CD4-positive, alpha-beta T cell (primary cell): ENCODE measurements at regions of chr6 and their contacts with region 1.

Region 1: DNA sequence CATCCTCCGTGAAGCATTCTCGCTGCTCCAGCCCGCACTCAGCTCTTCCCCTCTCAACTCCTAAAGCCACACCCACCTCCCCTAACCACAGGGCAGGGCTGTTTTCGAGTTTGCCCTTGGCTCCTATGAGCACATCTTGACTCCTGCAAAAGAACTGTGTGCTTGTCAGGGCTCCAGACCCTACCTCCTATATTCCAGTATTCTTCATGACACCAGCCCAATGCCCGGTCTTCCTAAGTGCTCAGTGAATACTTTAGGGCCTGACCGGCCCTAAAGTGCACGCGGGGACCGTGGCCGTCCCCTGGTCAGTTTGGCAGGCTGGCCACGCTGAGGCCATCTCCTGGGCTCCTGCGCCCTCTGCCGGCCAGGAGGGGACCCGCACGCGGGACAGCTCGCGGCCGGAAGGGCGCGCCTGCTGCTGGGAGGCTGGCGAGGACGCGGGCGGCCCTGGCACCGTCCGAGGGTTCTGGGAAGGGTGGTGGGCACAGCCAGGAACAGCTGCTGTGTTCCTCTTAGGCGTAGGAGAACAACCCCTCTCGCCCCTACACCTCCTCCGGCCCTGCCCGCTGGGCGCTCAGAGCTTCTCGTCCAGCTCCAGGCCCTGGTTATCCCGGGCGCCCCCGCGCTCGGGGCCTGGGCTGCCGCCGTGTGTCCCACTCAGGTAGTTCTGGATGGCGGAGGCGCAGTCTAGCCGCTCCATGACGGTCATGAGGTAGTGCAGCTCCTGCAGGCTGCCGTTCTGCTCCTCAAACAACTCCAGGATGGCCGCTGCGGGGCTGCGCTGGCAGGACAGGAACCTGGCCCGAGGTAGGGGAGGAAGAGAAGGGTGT is 11.0 kb downstream of the UNC5CL start:
- DNase-seq: peak; percentile 49 to 85 (median 66)
- ATAC-seq: peak; percentile 86
- H3K4me3 ChIP-seq: peak overlapping the region; percentile 78
- H3K4me3 Mint-ChIP-seq: peak overlapping the region; percentile 88
- H3K27ac ChIP-seq: peak overlapping the region in 1 of 2 donors; percentile 59
- H3K27ac Mint-ChIP-seq: peak overlapping the region; percentile 75
- H3K4me1 ChIP-seq: peaks cover 23% of the 10 kb centered on the region
- H3K4me1 Mint-ChIP-seq: peaks cover 33% of the 10 kb centered on the region
- H3K27me3 ChIP-seq: no peaks in the 10 kb centered on the region
- H3K27me3 Mint-ChIP-seq: no peaks in the 10 kb centered on the region
- CTCF ChIP-seq: peak; percentile 100

Region 2: GRCh38 chr6:39347906-39348585 is 1680.0 kb before region 1 on chr6:
- CTCF ChIA-PET with region 1: no interaction called
- POLR2A ChIA-PET with region 1: no interaction called
- intact Hi-C with region 1: loop called in 1 of 2 experiments (anchors 5 kb)
- DNase-seq: peak; percentile 20 to 64 (median 37)
- ATAC-seq: peak; percentile 37
- H3K4me3 ChIP-seq: no peak overlapping the region
- H3K4me3 Mint-ChIP-seq: no peak overlapping the region
- H3K27ac ChIP-seq: no peak overlapping the region
- H3K27ac Mint-ChIP-seq: no peak overlapping the region
- H3K4me1 ChIP-seq: no peaks in the 10 kb centered on the region
- H3K4me1 Mint-ChIP-seq: no peaks in the 10 kb centered on the region
- H3K27me3 ChIP-seq: no peaks in the 10 kb centered on the region
- H3K27me3 Mint-ChIP-seq: peaks cover 5% of the 10 kb centered on the region
- CTCF ChIP-seq: peak; percentile 84

Region 3: DNA sequence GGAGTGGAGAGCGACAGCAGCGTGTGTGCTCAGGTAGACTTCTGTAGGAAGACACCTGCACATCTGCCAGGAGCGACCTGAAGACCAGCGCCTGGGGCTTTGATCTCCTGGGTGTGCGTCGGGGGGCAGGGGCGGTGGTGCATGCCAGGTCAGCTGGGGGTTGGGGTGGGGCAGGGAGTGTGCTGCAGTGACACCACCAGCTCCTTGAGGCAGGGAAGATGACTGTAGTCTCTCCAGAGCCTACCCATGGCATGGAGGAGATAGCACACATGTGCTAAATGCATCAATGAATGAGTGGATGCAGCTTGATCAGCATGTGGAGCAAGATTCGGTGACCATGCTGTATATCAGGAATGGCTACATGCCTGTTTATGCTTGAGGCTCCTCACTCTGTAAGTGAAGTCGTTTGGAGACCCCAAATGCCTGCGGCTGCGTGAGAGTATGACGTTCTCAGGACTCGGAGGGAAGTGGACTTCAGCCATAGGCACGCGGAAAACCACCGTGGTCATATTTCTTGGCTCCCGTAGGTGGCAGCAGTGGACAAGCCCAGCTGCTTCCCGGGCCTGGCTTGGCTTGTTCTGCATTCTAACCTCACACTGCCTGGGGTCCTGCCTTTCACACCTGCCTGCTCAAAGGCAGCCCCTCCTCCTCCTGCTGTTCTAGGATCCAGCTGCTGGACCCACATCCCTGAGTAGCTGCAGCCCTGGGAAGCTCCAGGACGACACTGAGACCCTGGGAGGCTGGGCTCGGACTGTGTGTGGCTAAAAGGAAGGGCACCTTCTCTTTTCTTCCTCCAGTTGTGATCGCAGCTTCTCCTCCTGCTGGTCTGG is 1666.1 kb before region 1 on chr6:
- CTCF ChIA-PET with region 1: interaction called, 3 read pairs
- POLR2A ChIA-PET with region 1: no interaction called
- intact Hi-C with region 1: loop called in 1 of 2 experiments (anchors 5 kb)
- DNase-seq: peak in 13 of 14 experiments; percentile 13 to 65 (median 26)
- ATAC-seq: peak; percentile 52
- H3K4me3 ChIP-seq: no peak overlapping the region
- H3K4me3 Mint-ChIP-seq: no peak overlapping the region
- H3K27ac ChIP-seq: no peak overlapping the region
- H3K27ac Mint-ChIP-seq: no peak overlapping the region
- H3K4me1 ChIP-seq: peaks cover 7% of the 10 kb centered on the region
- H3K4me1 Mint-ChIP-seq: peaks cover 4% of the 10 kb centered on the region
- H3K27me3 ChIP-seq: no peaks in the 10 kb centered on the region
- H3K27me3 Mint-ChIP-seq: peaks cover 12% of the 10 kb centered on the region
- CTCF ChIP-seq: peak; percentile 60

Region 4: GRCh38 chr6:40962241-40962640 is 65.8 kb before region 1 on chr6:
- CTCF ChIA-PET with region 1: no interaction called
- POLR2A ChIA-PET with region 1: no interaction called
- intact Hi-C with region 1: no loop called
- DNase-seq: peak in 2 of 14 experiments; percentile 15 to 17
- ATAC-seq: no peak
- H3K4me3 ChIP-seq: no peak overlapping the region
- H3K4me3 Mint-ChIP-seq: no peak overlapping the region
- H3K27ac ChIP-seq: no peak overlapping the region
- H3K27ac Mint-ChIP-seq: no peak overlapping the region
- H3K4me1 ChIP-seq: no peaks in the 10 kb centered on the region
- H3K4me1 Mint-ChIP-seq: no peaks in the 10 kb centered on the region
- H3K27me3 ChIP-seq: no peaks in the 10 kb centered on the region
- H3K27me3 Mint-ChIP-seq: no peaks in the 10 kb centered on the region
- CTCF ChIP-seq: no peak

Region 5: DNA sequence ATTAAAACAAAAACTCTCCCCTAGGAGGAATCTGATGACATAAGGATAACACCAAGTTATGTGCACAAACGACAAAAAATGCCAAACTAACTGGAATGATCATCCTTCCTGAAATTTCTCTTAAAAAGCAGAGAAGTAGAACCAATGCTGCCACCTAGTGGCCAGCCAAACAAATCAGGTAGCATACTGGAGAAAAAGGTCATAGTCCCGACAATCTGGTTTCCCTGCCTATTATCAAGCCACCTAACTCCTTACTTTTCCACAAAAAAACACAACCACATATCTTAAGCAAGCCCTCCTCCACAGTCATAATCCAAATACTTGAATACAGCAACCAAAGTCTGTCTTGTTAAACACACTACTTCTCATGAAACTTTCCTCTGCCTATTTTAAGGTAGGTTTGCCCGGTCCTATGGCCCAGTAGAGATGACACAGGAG is 38.9 kb after region 1 on chr6:
- CTCF ChIA-PET with region 1: interaction called, 4 read pairs
- POLR2A ChIA-PET with region 1: interaction called, 25 read pairs
- intact Hi-C with region 1: loop called in 1 of 2 experiments (anchors 2 kb)
- DNase-seq: peak; percentile 41 to 86 (median 54)
- ATAC-seq: no peak
- H3K4me3 ChIP-seq: no peak overlapping the region
- H3K4me3 Mint-ChIP-seq: peak overlapping the region; percentile 37
- H3K27ac ChIP-seq: no peak overlapping the region
- H3K27ac Mint-ChIP-seq: no peak overlapping the region
- H3K4me1 ChIP-seq: peaks cover 7% of the 10 kb centered on the region
- H3K4me1 Mint-ChIP-seq: peaks cover 27% of the 10 kb centered on the region
- H3K27me3 ChIP-seq: no peaks in the 10 kb centered on the region
- H3K27me3 Mint-ChIP-seq: no peaks in the 10 kb centered on the region
- CTCF ChIP-seq: peak; percentile 94

Region 6: DNA sequence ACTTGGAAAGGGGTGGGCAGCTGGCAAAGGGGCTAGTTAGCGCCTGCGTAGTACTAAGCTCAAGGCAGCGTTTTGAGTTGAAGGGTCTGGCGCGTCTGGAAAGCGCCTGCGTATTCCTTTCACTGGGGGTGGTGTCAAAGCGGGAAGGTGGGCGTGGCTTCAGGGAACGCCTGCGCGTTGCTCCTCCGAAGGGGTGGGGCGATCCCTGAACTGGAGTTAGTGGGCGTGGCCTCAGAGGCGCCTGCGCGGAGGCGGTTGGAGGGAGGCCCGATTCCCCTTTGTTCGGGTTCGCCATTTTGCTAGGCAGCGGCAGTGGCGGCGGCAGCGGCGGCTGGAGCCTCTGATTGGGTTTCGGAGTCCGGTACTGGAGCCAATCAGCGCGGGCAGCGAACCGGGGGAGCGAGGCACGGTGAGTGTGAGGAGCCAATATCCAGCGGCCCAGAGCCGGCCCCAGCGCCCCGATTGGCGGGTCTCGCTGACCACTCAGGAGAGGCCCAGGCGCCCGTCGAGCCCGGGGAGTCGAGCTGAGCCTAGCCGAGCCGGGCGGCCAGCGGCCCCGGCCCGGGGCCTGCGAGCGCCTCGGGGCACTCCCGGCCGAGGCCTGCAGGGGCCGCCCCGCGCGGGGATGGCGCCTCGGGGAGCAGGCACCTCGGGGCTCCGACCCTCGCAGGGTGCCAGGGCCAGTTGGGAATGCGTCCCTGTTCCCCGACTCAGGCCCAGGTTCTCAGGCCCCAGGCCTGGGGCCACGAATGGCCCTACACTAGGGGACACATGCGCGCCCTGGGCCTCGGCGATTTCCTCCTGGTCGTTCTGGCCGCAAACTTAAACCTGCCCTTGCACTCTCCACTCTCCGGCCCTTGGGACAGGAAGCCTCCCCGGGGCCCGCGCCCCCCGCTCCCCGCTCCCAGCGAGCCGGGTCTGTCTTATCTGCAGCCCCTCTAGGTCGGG is 44.9 kb after region 1 on chr6 and contains the start of gene NFYA:
- CTCF ChIA-PET with region 1: interaction called, 4 read pairs
- POLR2A ChIA-PET with region 1: interaction called, 25 read pairs
- intact Hi-C with region 1: no loop called
- DNase-seq: peak in 13 of 14 experiments; percentile 100
- ATAC-seq: peak; percentile 62
- H3K4me3 ChIP-seq: peak within 1 kb of the TSS; percentile 70
- H3K4me3 Mint-ChIP-seq: peak within 1 kb of the TSS; percentile 93
- H3K27ac ChIP-seq: peak within 1 kb of the TSS; percentile 95 to 96
- H3K27ac Mint-ChIP-seq: peak within 1 kb of the TSS; percentile 88
- H3K4me1 ChIP-seq: peaks cover 23% of the 10 kb centered on the region
- H3K4me1 Mint-ChIP-seq: peaks cover 51% of the 10 kb centered on the region
- H3K27me3 ChIP-seq: no peaks in the 10 kb centered on the region
- H3K27me3 Mint-ChIP-seq: no peaks in the 10 kb centered on the region
- CTCF ChIP-seq: peak; percentile 33
- total RNA-seq, gene NFYA: 26.7 to 27.3 TPM

Region 7: DNA sequence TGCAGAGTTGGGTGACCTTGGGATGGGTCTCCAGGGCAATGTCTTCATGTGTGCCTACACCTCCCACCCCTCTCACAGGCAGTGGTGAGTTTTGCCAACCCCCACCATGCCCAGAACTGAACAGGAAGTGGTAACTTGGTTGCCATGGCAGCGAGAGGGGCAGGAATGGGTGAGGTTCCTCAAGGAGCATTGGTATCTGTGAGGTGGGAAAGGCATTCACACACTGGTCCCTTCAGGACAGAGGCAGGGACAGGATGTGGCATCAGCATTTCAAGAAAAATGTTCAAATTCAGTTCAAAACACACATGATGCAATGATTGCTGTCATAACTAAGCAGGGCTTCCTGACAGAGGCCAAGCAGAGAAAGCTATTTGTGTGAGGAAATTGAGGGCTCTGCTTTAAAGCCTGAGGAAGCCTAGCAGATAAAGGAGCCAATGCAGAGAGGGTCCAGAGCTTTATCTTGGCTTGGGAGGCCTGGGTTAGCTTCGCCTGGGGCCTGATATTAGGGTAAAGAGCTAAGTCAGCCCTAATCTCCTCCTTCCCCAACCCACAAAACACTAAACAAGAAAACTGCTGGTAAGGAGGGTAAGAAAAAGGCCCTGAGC is 172.4 kb after region 1 on chr6:
- CTCF ChIA-PET with region 1: no interaction called
- POLR2A ChIA-PET with region 1: interaction called, 11 read pairs
- intact Hi-C with region 1: no loop called
- DNase-seq: peak; percentile 14 to 93 (median 50)
- ATAC-seq: peak; percentile 82
- H3K4me3 ChIP-seq: peak overlapping the region; percentile 34
- H3K4me3 Mint-ChIP-seq: peak overlapping the region; percentile 81
- H3K27ac ChIP-seq: peak overlapping the region; percentile 85 to 96
- H3K27ac Mint-ChIP-seq: peak overlapping the region; percentile 100
- H3K4me1 ChIP-seq: peaks cover 56% of the 10 kb centered on the region
- H3K4me1 Mint-ChIP-seq: peaks cover 79% of the 10 kb centered on the region
- H3K27me3 ChIP-seq: no peaks in the 10 kb centered on the region
- H3K27me3 Mint-ChIP-seq: no peaks in the 10 kb centered on the region
- CTCF ChIP-seq: no peak